ENCODE measurements at regions of chr14 and their contacts with region 1.

Region 1: DNA sequence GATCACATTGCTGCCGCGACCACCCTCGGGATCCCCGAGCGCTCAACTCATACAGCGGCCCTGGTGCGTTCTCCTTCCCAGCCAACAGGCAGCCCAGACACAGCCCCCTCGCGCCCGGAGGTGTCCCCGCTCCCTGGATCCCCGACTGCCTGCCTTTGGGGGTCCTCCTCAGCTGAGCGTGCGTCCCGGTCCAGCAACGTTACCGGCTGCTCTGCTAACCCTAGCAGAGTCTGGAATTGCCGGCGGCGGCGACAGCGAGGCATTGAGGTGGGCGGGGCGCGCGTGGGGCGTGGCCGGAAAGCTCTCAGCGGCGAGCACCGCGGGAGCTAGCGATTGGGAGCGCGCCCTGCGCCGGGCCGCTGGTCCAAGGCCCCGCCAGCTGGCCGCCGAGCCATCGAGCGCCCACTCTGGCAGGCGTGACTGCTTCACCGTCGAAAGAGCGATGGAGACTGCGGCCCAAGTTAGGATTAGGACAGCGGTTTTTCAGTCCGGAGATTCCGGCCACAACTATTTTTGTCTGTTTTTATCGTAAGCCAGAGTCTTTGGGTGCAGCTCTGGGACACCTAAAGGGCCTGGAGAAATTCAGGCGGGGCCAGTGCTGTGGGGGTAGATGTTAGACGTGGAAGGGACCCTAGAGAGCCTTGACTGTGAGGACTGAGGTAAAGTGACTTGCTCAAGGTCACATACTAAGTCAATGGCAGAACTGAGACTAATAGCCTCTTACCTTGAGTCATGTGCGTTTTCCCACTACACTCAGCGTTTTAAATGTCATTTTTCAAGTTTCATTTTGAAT is at the start of gene HEATR5A:
- DNase-seq: peak; percentile 51
- H3K4me3 ChIP-seq: peak within 1 kb of the TSS; percentile 100
- CTCF ChIP-seq: peak; percentile 43

Region 2: DNA sequence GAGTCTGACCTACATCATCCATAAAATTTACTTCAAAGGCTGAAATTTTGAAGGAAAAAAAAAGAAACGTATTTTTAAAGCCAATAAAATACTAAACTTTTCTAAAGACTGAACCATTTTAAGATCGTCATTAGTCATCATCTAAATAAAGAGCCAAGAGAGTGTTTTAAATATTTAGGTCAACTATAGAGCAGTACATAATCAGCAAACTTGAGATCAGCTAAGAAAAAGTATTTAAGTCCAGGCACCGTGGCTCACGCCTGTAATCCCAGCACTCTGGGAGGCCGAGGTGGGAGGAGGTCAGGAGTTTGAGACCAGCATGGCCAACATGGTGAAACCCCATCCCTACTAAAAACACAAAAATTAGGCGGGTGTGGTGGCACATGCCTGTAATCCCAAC is 248.4 kb before region 1 on chr14:
- CTCF ChIA-PET with region 1: no interaction called
- POLR2A ChIA-PET with region 1: no interaction called
- DNase-seq: no peak
- H3K4me3 ChIP-seq: no peak overlapping the region
- CTCF ChIP-seq: no peak

Region 3: DNA sequence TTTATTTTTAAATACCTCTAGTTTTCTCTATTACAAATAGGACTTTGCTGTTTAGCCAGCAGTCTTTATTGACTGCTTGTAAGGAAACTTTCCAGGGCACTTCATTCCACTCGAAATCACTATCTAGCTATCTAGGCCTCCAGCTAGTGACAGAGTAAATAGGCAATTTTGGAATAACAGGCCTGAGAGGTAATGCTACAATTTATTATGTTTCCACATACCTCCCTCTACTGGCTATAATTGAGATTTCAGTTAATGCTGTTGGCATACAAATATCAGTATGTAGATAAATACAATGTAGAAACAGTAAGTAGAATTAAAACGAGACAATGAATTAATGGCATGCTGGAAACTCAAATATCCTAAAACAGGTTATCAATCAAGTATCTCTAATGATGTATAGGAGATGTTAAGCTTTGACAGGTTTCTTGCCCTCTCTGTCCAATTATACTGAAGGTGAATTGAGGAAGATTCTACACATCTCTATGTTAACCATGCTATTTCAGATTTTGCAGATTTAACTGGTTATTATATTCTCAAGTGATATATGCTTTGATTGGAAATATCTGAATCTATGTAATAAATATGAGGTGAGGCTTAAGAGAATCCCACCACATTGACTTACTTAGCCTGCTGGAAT is 29.6 kb after region 1 on chr14:
- CTCF ChIA-PET with region 1: interaction called, 19 read pairs
- POLR2A ChIA-PET with region 1: interaction called, 6 read pairs
- DNase-seq: no peak
- H3K4me3 ChIP-seq: no peak overlapping the region
- CTCF ChIP-seq: peak; percentile 40

Region 4: GRCh38 chr14:31456841-31457664 is 36.5 kb after region 1 on chr14 and contains the start of gene DTD2:
- CTCF ChIA-PET with region 1: no interaction called
- POLR2A ChIA-PET with region 1: interaction called, 11 read pairs
- DNase-seq: peak; percentile 38
- H3K4me3 ChIP-seq: peak within 1 kb of the TSS; percentile 79
- CTCF ChIP-seq: no peak

Region 5: DNA sequence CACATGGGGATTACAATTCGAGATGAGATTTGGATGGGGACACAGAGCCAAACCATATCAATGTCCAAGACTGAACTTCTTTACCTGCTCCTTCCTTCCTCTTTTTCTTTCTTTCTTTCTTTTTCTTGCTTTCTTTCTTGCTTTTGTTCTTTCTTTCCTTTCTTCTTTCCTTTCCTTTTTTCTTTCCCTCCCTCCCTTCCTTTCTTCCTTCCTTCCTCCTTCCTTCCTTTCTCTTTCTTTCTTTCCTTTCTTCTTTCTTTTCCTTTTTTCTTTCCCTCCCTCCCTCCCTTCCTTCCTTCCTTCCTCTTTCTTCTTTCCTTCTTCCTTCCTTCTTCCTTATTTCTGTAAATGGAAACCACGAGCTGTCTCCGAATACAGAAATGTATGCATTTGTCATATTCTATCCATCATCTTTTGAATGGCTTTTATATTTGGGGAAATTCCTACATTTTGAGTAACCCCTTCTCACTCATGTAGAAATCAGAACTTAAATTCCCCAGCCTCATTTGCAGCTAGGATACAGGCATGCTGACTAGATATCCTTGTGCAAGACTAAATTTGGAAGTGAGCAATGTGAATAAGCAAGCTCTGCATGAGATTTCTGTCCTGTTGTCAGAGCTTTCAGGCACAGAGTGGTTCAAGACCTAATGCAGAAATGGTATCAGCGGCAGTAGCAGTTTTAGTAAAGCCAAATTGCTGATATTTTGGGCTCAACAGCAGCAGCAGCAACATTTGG is 55.8 kb after region 1 on chr14:
- CTCF ChIA-PET with region 1: no interaction called
- POLR2A ChIA-PET with region 1: no interaction called
- DNase-seq: no peak
- H3K4me3 ChIP-seq: no peak overlapping the region
- CTCF ChIP-seq: no peak